ENCODE measurements at regions of chr15 and their contacts with region 1.

Region 1: DNA sequence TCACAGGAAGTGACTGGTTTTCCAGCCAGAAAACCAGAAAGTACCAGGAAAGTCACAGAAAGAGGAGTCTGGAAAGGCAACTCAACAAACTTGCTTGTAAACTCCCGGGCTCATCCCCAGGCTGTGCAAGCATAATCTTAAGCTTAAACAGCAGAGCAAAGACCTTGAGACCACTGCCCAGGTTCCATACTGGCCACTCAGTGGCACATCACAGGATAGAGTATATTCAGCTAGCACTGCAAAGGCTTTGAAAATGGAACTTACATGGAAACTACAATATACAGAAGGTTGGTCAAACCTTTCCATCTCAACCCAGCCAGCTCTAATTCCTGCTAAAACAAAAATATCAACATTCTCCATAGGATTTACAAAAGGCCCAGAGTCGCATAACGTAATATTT is 20.1 kb downstream of the DMXL2 start:
- DNase-seq: no peak
- ATAC-seq: no peak
- H3K4me3 ChIP-seq: peak overlapping the region in 1 of 2 experiments; percentile 34; a peak in 2 of 4 replicates
- H3K27ac ChIP-seq: peak overlapping the region; percentile 74
- H3K4me1 ChIP-seq: peaks cover 8% of the 10 kb centered on the region
- H3K27me3 ChIP-seq: no peaks in the 10 kb centered on the region
- CTCF ChIP-seq: no peak

Region 2: DNA sequence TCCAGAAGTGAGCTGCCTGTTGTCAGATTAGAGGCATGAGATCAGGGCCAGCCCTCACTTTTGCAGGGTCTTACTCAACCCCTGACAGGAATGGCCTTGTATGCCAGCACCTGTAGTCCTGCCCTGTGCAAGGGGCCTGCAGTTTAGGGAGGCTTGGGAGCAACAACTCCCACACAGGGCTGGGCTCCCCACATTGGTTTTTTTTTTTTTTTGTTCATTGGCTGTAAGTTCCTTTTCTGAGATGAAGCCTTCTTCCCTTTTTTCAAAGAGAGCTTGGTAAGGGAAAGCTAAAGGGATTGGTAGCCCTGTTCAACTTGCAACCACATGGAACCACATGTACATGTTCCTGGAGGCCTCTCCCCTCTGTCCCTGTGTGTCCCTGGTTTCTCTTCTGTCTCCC is 554.2 kb before region 1 on chr15:
- CTCF ChIA-PET with region 1: no interaction called
- POLR2A ChIA-PET with region 1: interaction called, 10 read pairs
- in situ Hi-C with region 1: no loop called
- intact Hi-C with region 1: no loop called
- DNase-seq: no peak
- ATAC-seq: no peak
- H3K4me3 ChIP-seq: no peak overlapping the region
- H3K27ac ChIP-seq: no peak overlapping the region
- H3K4me1 ChIP-seq: no peaks in the 10 kb centered on the region
- H3K27me3 ChIP-seq: no peaks in the 10 kb centered on the region
- CTCF ChIP-seq: no peak

Region 3: DNA sequence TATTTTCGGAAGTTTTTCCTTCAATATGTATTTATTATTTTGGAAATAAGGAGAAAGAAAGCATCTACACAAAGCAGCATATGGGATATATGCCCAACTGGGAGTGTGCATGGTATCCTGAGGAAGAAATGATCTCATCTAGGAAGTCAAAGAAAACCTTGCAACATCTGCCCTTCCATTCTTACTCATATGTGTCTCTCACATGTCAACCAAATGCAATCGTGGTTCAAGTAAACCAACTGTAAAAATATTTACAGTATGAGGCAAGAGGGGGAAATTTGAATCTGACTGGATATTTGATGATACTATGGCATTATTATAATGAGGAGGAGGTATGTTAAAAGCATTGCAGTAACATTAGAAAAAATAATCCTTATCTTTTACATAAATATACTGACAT is 75.6 kb after region 1 on chr15:
- CTCF ChIA-PET with region 1: no interaction called
- POLR2A ChIA-PET with region 1: no interaction called
- in situ Hi-C with region 1: no loop called
- intact Hi-C with region 1: no loop called
- DNase-seq: no peak
- ATAC-seq: no peak
- H3K4me3 ChIP-seq: no peak overlapping the region
- H3K27ac ChIP-seq: no peak overlapping the region
- H3K4me1 ChIP-seq: no peaks in the 10 kb centered on the region
- H3K27me3 ChIP-seq: peaks cover 40% of the 10 kb centered on the region
- CTCF ChIP-seq: no peak